AG04449 (cell line): ENCODE measurements at regions of chr3 and their contacts with region 1.

Region 1: DNA sequence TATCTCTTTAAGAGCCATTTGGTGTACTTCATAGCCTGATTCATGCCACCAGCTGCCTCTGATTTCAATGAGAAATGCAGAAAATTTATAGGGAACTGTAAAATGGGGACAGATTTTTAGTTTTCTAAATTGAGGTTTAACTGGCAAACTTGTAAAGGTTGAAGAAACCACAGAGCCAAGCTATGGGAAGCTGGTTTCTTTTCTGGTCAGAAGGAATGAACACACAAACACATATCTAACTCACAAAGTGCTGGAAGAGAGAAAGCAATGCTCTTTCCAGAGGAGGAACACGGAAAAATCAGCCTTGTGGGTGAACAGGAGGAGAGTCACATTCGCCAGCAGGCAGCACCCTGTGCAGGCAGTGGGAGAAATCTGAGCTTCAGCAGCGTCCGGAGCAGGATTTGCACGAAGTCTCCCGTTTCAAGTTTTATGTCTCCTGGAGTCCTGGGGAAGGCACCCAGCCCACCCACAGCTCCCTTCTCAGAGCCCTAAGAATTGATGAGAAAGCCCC is 481 bp downstream of the MASP1 start:
- DNase-seq: no peak
- H3K4me3 ChIP-seq: peak overlapping the region; percentile 62
- CTCF ChIP-seq: no peak

Region 2: GRCh38 chr3:187227658-187228258 is 63.3 kb before region 1 on chr3:
- CTCF ChIA-PET with region 1: interaction called, 36 read pairs
- POLR2A ChIA-PET with region 1: interaction called, 3 read pairs
- DNase-seq: peak; percentile 46
- H3K4me3 ChIP-seq: no peak overlapping the region
- CTCF ChIP-seq: no peak

Region 3: GRCh38 chr3:187567661-187568121 is 276.6 kb after region 1 on chr3:
- CTCF ChIA-PET with region 1: no interaction called
- POLR2A ChIA-PET with region 1: no interaction called
- DNase-seq: peak; percentile 76
- H3K4me3 ChIP-seq: no peak overlapping the region
- CTCF ChIP-seq: no peak